Mammary epithelial cell (primary cell): ENCODE measurements at regions of chr11 and their contacts with region 1.

Region 1: DNA sequence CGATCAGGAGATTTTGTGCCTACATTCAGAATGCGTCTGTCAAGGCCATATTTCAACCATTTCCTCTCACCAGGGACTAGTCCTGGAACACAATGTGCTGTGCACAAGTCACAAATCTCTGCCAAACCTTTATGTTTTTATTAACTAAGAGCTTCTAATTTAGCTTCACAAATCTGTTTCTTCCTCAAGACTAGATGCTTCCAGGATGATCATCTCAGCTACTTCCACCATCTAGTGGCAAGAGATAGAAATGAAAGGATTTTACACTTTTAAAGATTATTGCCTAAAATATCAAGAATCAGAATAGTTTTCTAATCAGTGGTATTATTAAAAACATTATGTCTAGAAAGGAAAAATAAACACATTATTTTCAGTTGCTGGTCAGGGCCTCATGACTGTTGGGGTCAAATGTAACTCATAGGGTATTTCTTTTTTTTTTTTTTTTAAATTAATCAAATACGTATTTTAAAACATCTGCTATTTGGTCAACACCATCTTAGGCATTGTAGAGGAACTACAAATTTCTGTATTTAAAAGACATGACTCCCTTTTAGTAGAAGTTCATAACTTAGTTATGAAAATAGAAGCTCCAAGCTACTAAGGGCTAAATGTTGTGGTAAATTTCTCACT is 1102.6 kb downstream of the DLG2 start:
- DNase-seq: no peak
- H3K4me3 ChIP-seq: no peak overlapping the region
- H3K27ac ChIP-seq: no peak overlapping the region
- H3K4me1 ChIP-seq: no peaks in the 10 kb centered on the region
- H3K27me3 ChIP-seq: no peaks in the 10 kb centered on the region
- CTCF ChIP-seq: peak; percentile 44 to 57

Region 2: DNA sequence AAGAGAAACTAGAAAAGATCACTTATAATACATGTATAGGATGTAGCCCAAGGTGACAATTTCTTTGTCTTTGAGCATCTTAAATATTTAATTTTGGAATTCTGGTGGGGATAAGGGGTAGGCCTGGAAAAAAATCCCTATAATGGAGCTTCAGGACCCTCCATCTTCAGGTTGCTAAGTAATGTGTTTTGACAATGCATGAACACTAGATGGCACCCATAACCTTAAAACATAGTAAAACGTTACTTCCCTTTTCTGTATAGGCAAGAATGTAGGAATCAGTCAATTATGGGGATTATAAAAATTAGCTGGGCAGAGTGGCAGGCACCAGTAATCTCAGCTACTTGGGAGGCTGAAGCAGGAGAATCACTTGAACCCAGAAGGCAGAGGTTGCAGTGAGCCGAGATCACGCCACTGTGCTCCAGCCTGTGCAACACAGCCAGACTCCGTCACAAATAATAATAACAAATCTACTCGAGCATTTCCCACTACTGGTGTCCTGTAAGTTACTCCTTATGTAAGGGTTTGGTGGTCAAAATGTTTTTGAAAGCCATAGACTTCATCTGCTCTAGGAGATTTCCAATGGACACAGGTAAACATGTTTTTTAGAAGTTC is 696.5 kb before region 1 on chr11:
- CTCF ChIA-PET with region 1: no interaction called
- dilution Hi-C with region 1: no loop called
- in situ Hi-C with region 1: loop called in 1 of 2 experiments (anchors 25 kb)
- intact Hi-C with region 1: loop called (anchors 2 kb)
- DNase-seq: no peak
- H3K4me3 ChIP-seq: no peak overlapping the region
- H3K27ac ChIP-seq: no peak overlapping the region
- H3K4me1 ChIP-seq: no peaks in the 10 kb centered on the region
- H3K27me3 ChIP-seq: no peaks in the 10 kb centered on the region
- CTCF ChIP-seq: peak; percentile 49 to 56

Region 3: GRCh38 chr11:84384731-84385130 is 139.8 kb before region 1 on chr11:
- CTCF ChIA-PET with region 1: no interaction called
- dilution Hi-C with region 1: no loop called
- in situ Hi-C with region 1: no loop called
- intact Hi-C with region 1: loop called (anchors 1 kb)
- DNase-seq: peak; percentile 28
- H3K4me3 ChIP-seq: no peak overlapping the region
- H3K27ac ChIP-seq: no peak overlapping the region
- H3K4me1 ChIP-seq: no peaks in the 10 kb centered on the region
- H3K27me3 ChIP-seq: no peaks in the 10 kb centered on the region
- CTCF ChIP-seq: peak; percentile 81 to 87

Region 4: DNA sequence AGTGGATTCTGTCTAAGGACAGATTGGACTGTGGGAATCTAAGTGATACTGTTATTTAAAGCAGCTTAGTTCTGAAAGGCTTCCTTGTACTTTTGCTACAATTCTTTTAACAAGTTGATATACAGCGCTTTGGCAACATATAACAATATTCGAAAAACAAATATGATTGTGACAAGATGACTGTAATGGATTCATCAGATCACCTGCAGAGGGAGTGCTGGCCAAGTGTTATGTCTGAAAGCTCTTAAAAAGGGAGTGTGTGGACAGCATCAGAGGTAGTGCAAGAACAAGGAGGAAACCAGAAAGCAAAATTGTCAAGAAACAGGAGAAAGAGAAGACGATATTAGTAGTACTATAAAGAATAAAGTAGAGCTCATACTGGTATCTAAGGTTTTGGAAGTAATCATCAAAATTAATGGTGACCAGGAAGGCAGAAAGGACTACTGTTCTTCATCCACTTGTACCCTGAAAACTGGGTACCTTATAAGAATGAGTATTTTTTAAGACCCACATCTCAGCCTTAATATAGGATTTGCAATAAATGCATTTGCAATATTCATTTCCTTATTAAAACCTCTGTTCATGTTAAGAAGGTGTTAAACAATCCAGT is 126.4 kb before region 1 on chr11:
- CTCF ChIA-PET with region 1: no interaction called
- dilution Hi-C with region 1: no loop called
- in situ Hi-C with region 1: no loop called
- intact Hi-C with region 1: loop called (anchors 5 kb)
- DNase-seq: peak; percentile 4
- H3K4me3 ChIP-seq: no peak overlapping the region
- H3K27ac ChIP-seq: no peak overlapping the region
- H3K4me1 ChIP-seq: no peaks in the 10 kb centered on the region
- H3K27me3 ChIP-seq: no peaks in the 10 kb centered on the region
- CTCF ChIP-seq: peak; percentile 36 to 53

Region 5: DNA sequence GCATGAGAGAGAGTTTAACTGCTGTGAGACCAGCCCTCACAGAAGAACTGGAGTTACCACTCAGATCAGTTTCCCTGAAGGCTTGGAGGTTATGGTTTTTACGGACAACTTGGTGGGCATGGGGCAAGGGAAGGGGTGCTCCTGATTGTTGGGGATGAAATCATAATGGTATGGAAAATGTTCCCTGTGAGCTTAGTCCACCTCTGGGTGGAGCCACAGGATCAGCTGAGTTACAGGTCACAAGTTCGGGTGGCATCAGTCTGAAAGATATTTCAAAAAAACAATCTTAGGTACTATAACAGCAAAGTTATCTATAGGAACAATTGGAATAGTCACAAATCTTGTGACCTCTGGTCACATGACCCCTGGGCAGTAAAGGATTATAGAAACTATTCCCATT is 939.7 kb after region 1 on chr11:
- CTCF ChIA-PET with region 1: no interaction called
- dilution Hi-C with region 1: no loop called
- in situ Hi-C with region 1: no loop called
- intact Hi-C with region 1: no loop called
- DNase-seq: no peak
- H3K4me3 ChIP-seq: no peak overlapping the region
- H3K27ac ChIP-seq: no peak overlapping the region
- H3K4me1 ChIP-seq: no peaks in the 10 kb centered on the region
- H3K27me3 ChIP-seq: no peaks in the 10 kb centered on the region
- CTCF ChIP-seq: no peak